Breast epithelium (tissue), 4 donors: ENCODE measurements at regions of chr14 and their contacts with region 1.

Region 1: DNA sequence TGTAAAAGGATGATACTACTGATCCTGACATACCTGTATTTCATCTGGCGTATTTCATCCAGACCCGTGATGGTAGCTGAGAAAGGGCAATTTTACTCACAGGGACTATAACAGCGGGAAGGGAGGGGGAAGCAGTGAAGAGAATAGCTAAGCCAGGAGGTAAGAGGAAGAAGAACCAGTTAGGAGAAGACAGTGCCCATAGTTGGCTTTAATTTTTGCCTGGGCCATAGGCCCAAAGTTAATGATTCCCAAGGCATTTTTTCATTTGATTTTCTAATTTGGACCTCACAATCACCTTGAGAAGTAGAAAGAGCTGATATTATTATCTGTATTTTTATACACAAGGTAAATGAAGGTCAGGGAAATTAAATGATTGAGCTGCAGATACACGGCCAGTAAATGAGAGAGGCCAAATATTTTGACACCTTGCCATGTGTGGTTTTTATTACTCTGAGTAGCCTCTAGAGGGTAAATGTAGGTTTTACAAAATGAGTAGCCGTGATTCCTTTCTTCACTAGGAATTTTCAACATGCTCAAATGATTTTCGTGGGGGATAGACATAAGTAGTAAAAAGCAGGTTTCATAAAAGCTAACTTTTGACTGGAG is 382.2 kb downstream of the FUT8 start:
- DNase-seq: no peak
- H3K4me3 ChIP-seq: no peak overlapping the region
- H3K27ac ChIP-seq: no peak overlapping the region
- H3K4me1 ChIP-seq: peaks cover 0 to 4% of the 10 kb centered on the region in 2 donors
- H3K27me3 ChIP-seq: no peaks in the 10 kb centered on the region
- CTCF ChIP-seq: no peak
- POLR2A ChIP-seq: no peak

Region 2: GRCh38 chr14:64930085-64930843 is 864.5 kb before region 1 on chr14:
- intact Hi-C with region 1: loop called (anchors 5 kb)
- DNase-seq: no peak
- H3K4me3 ChIP-seq: no peak overlapping the region
- H3K27ac ChIP-seq: peak overlapping the region; percentile 24 to 53
- H3K4me1 ChIP-seq: no peaks in the 10 kb centered on the region
- H3K27me3 ChIP-seq: no peaks in the 10 kb centered on the region
- CTCF ChIP-seq: no peak
- POLR2A ChIP-seq: no peak